ENCODE measurements at regions of chr6 and their contacts with region 1.

Region 1: GRCh38 chr6:30169658-30170614 is 6.6 kb downstream of the TRIM15 start:
- DNase-seq: peak in 1 of 3 donors; percentile 54
- ATAC-seq: peak; percentile 72
- H3K4me3 ChIP-seq: no peak overlapping the region
- H3K4me1 ChIP-seq: no peaks in the 10 kb centered on the region
- CTCF ChIP-seq: peak; percentile 34

Region 2: GRCh38 chr6:29564875-29565274 is 605.1 kb before region 1 on chr6:
- intact Hi-C with region 1: no loop called
- DNase-seq: no peak
- ATAC-seq: no peak
- H3K4me3 ChIP-seq: no peak overlapping the region
- H3K4me1 ChIP-seq: no peaks in the 10 kb centered on the region
- CTCF ChIP-seq: no peak

Region 3: DNA sequence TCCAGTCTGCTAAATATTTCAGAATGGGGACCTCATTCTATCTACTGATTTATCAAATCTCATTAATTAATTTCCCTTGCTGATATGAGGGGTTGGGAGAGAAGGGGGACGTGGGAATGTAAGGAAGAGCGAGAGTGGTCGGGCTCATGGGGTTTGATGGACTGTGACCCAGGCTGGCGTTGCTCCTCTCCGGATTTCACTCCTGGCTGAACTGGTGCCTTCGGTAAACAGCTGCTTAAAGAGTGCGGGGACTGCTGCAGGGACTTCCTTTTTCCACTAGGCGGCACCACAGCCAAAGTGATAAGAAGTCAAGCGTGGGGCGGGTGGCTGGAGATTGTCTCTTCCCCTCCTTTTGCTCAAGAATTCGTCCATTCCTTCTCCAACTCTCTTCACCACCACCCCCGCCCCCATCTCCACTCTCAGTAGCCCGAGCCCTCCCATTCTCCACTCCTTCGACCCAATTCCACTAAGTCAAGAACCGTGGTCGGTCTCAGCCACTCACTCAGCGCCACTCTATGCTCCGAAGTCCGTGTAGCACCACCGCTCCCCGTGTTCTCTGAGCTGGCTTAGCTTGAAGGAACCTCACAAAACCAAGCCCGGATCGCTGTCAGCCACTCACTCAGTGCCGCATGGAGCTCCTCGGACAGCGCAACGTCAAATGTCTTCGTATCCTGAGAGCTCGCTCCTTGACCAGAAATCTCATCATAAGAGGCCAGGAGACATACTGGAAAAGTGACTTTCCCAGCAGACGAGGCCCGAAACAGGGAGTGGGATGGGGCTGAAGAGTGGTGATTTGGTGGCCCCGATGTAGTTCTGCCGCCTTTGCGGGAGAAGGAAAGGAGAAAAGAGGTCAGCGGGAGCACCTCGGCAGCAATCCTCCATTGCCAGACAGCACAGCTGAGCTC is 66.7 kb before region 1 on chr6:
- intact Hi-C with region 1: loop called in 1 of 2 experiments (anchors 10 kb)
- DNase-seq: peak; percentile 89 to 97 (median 90)
- ATAC-seq: peak; percentile 73
- H3K4me3 ChIP-seq: no peak overlapping the region
- H3K4me1 ChIP-seq: peaks cover 24% of the 10 kb centered on the region
- CTCF ChIP-seq: peak; percentile 78

Region 4: DNA sequence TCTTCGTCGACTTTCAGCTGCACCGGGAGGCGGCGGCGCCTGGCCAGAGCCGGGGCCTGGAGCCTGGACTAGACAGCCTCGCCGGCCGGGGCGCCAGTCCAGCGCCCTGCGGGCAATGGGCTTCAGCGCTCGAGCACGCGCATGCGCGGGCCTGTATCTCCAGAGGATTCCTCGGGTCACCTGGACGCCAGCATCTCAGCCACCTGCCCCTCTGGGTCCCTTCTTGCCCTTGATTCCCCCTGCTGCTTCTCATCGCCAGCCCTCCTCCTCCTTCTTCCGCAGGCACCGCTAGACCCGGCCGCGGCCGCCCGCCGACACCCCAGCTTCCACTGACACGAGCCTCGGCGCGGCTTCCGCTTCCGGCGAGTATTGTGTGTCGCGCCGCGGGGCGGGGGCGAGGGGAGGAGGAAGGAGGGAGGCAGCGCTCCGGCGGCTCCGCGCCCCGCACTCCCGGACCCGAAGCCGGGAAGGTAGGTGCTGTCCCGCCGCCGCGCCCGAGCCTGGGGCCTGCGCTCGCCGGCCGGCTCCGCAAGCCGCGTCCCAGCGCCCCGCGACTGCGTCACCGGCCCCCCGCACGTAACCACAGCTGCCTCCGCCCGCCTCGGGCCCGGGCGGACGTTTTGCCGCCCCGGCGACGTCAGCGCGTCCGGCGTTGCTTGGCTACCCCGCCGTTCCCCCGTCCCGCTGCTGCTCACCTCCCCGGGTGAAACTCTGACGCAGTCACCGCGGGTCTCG is 156.8 kb after region 1 on chr6 and contains the start of gene TRIM39:
- intact Hi-C with region 1: no loop called
- DNase-seq: peak; percentile 92 to 93 (median 93)
- ATAC-seq: peak; percentile 91
- H3K4me3 ChIP-seq: peak within 1 kb of the TSS; percentile 85
- H3K4me1 ChIP-seq: peaks cover 18% of the 10 kb centered on the region
- CTCF ChIP-seq: no peak
- total RNA-seq, gene TRIM39: 9.5 to 16.2 (median 10.4) TPM

Region 5: GRCh38 chr6:30378290-30378937 is 208.5 kb after region 1 on chr6:
- intact Hi-C with region 1: no loop called
- DNase-seq: peak in 1 of 3 donors; percentile 12
- ATAC-seq: no peak
- H3K4me3 ChIP-seq: no peak overlapping the region
- H3K4me1 ChIP-seq: no peaks in the 10 kb centered on the region
- CTCF ChIP-seq: no peak